ENCODE measurements at regions of chr20 and their contacts with region 1.

Region 1: GRCh38 chr20:38893565-38894090 is 32.6 kb upstream of the FAM83D start:
- DNase-seq: peak; percentile 86
- ATAC-seq: peak; percentile 87
- H3K4me3 Mint-ChIP-seq: peak overlapping the region; percentile 42
- H3K27ac Mint-ChIP-seq: peak overlapping the region; percentile 89
- H3K4me1 Mint-ChIP-seq: peaks cover 68% of the 10 kb centered on the region
- H3K27me3 Mint-ChIP-seq: no peaks in the 10 kb centered on the region

Region 2: DNA sequence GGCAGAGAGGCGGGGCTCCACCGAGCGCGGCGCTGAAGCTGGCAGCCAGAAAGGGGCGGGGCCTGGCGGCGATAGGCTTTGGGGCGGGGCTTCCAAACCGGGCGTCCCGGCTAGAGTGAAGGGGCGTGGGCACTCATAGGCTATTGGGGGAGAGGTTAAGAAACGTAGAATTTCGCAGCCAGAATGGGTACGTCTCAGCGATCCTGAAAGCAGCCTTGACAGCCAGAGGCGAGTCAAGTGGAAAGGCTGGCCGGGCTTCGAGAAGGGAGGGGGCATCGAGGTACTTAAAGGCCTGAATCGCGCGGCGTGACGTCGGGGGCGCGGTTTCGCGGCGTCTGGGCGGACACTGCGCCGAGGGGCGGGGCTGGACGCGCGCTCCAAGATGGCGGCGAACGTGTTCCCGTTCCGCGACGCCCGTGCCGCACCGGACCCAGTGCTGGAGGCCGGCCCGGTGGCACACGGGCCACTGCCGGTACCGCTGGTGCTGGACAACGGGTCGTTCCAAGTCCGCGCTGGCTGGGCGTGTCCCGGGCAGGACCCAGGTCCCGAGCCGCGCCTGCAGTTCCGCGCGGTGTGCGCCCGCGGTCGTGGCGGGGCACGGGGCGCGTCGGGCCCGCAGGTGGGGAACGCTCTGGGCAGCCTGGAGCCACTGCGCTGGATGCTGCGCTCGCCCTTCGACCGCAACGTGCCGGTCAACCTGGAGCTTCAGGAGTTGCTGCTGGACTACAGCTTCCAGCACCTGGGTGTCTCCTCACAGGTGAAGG is 145.3 kb before region 1 on chr20 and contains the start of gene ACTR5:
- CTCF ChIA-PET with region 1: interaction called, 20 read pairs
- DNase-seq: peak; percentile 97
- ATAC-seq: peak; percentile 91
- H3K4me3 Mint-ChIP-seq: peak within 1 kb of the TSS; percentile 91
- H3K27ac Mint-ChIP-seq: peak within 1 kb of the TSS; percentile 93
- H3K4me1 Mint-ChIP-seq: peaks cover 26% of the 10 kb centered on the region
- H3K27me3 Mint-ChIP-seq: peaks cover 7% of the 10 kb centered on the region
- total RNA-seq, gene ACTR5: 9.5 to 10.6 TPM

Region 3: DNA sequence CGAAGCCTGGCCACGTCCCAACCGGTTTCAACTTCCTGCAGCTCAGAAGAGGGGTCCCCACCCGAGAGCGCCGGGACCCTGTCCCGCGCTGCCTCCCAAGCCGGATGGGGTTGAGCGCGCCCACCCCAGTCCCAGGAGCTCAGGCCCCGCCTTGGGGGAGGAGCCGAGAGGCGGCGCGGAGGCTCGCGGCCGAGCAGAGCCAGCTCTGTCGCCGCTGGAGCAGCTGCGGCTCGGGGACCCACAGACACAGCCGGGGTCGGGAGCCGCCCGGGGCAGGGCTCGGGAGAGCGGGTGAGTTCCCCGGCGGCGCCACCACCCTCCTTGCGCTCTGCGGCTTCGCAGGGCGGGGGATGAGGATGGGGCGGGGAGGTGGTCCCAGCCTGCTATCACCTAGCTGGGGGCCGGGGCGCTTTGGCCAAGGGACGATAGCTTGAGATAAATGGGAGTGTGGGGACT is 88.1 kb before region 1 on chr20 and contains the start of gene PPP1R16B:
- CTCF ChIA-PET with region 1: interaction called, 38 read pairs
- DNase-seq: peak; percentile 93
- ATAC-seq: peak; percentile 86
- H3K4me3 Mint-ChIP-seq: peak within 1 kb of the TSS; percentile 88
- H3K27ac Mint-ChIP-seq: peak within 1 kb of the TSS; percentile 98
- H3K4me1 Mint-ChIP-seq: peaks cover 57% of the 10 kb centered on the region
- H3K27me3 Mint-ChIP-seq: no peaks in the 10 kb centered on the region
- total RNA-seq, gene PPP1R16B: 86.5 to 128 TPM

Region 4: GRCh38 chr20:38842558-38842981 is 51.1 kb before region 1 on chr20:
- CTCF ChIA-PET with region 1: interaction called, 14 read pairs
- DNase-seq: peak; percentile 62
- ATAC-seq: no peak
- H3K4me3 Mint-ChIP-seq: peak overlapping the region; percentile 32
- H3K27ac Mint-ChIP-seq: peak overlapping the region; percentile 77
- H3K4me1 Mint-ChIP-seq: peaks cover 85% of the 10 kb centered on the region
- H3K27me3 Mint-ChIP-seq: no peaks in the 10 kb centered on the region

Region 5: DNA sequence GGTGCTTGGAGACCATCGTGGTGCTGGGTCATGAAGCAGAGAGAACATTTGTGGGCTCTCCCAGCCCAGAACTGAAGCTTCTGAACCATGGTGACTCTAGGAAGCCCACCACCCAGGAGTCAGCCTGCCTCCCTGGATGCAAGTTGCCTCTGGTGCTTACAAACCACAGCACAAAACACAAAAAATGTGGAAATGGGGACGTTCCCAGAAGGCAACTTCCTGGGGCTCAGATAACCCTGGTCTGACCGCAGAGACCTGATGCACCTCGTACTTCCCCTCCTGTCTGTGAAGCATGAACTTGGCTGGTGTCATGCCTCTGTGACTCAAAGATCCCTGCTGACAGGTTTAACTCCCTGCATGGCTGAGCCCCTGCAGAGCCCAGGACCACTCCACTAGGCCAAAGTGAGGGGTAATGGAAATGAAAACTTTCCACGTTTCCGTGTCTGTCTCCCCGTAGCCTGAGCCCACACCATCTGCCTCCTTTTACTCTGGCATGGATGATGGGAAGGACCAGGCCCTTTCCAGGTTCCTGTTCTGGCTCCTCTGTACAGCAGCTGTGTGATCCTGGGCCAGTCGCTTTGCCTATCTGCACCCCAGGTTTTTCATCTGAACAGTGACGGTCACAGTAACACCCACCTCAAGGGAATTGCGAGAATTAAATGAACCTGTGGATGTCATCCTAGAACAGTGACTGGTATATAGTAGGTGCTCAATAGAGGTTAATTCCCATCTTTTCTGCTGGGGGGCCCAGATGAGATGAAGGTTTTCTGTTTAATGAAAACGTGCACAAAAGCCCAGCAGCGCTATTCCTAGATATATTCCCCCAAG is 30.4 kb before region 1 on chr20:
- CTCF ChIA-PET with region 1: interaction called, 12 read pairs
- DNase-seq: peak; percentile 82
- ATAC-seq: peak; percentile 84
- H3K4me3 Mint-ChIP-seq: peak overlapping the region; percentile 21
- H3K27ac Mint-ChIP-seq: peak overlapping the region; percentile 84
- H3K4me1 Mint-ChIP-seq: peaks cover 77% of the 10 kb centered on the region
- H3K27me3 Mint-ChIP-seq: no peaks in the 10 kb centered on the region

Region 6: DNA sequence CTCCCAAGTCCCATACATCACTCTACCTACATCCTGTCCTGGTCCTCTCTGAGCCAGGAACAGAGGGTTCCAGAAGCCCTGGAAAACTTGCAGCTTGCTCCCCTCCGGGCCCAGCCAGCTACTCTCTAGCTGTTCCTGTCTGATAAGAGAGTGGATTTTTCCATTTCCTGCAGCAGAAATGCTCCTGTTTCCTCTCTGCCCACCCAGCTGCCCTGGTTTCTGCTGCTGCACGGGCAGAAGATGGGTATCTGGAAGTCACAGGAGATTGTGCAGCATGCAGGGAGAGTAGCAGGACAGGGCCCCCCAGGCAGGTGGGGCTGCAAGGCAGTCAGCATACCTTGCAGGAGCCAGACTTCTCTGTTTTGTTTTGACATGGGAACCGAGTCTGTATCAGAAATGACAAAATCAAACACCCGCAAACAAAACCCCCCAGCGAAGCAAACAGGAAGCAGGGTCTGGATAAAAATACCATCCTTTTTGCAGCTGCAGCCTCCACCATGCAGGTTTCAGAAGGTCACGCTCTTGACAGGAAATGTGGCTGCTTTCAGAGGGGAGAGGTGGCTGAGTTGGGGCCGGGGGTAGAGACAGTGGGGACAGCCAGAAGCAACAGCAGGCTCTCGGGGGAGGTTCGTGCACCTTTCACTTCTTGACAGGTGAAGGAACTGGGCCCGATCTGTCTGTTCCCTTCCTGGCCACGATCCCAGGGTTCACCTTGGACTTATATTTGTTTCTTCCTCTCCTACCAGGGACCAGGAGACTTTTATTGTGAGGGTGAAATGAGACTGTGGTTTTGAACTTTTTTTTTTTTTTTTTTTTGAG is 18.2 kb before region 1 on chr20:
- CTCF ChIA-PET with region 1: interaction called, 25 read pairs
- DNase-seq: peak; percentile 89
- ATAC-seq: peak; percentile 43
- H3K4me3 Mint-ChIP-seq: peak overlapping the region; percentile 61
- H3K27ac Mint-ChIP-seq: peak overlapping the region; percentile 90
- H3K4me1 Mint-ChIP-seq: peaks cover 95% of the 10 kb centered on the region
- H3K27me3 Mint-ChIP-seq: no peaks in the 10 kb centered on the region

Region 7: GRCh38 chr20:38883081-38883980 is 10.3 kb before region 1 on chr20:
- CTCF ChIA-PET with region 1: interaction called, 42 read pairs
- DNase-seq: no peak
- ATAC-seq: peak; percentile 51
- H3K4me3 Mint-ChIP-seq: peak overlapping the region; percentile 19
- H3K27ac Mint-ChIP-seq: peak overlapping the region; percentile 78
- H3K4me1 Mint-ChIP-seq: peaks cover 66% of the 10 kb centered on the region
- H3K27me3 Mint-ChIP-seq: no peaks in the 10 kb centered on the region